ENCODE measurements at regions of chr12 and their contacts with region 1.

Region 1: DNA sequence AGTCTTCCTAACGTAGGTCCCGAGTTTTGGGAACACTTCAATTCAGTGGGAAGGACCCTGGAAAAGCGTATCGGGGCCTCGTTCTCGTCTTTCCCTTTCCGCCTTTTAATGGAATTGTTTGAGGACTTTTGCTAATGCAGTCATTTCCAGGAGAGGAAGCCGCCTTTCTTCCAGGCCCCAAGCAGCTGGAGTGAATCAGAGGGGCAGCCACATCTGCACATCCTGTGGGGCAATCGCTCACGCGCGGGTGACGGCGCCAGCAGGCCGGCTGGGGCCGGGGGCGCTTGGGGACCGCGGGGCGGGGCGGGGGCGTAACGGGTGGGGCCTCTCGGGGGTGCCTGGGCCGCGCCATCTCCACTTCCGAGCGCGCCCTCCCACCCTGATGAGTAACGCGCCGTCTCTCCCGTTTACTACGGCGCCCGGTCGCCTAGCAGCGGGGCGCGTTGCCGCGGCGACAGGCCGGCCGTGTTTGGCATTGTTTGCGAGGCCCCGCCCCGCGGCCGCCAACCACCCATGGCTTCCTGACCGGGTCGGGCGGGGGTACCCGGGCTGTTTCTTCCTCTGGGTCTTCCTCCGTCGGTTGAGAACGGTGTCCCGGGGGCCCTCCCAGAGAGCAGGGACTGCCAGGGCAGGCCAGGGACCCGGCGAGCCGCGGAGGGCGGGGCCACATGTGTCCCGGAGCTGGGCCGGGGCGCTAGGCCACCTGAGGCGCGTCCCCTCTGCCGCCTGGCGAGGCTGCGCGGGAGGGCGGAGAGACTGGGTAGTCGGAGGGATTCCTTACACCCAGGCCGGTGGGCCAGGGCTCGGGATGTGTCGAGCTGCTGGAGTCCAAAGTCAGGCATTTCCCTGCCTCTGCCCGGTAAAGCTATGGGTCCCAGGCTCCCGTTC is 2.3 kb downstream of the GSG1 start:
- DNase-seq: peak; percentile 92
- ATAC-seq: peak; percentile 55
- H3K4me3 ChIP-seq: peak overlapping the region; percentile 71
- H3K27ac ChIP-seq: peak overlapping the region; percentile 99
- H3K4me1 ChIP-seq: peaks cover 59% of the 10 kb centered on the region
- H3K27me3 ChIP-seq: no peaks in the 10 kb centered on the region
- CTCF ChIP-seq: no peak

Region 2: DNA sequence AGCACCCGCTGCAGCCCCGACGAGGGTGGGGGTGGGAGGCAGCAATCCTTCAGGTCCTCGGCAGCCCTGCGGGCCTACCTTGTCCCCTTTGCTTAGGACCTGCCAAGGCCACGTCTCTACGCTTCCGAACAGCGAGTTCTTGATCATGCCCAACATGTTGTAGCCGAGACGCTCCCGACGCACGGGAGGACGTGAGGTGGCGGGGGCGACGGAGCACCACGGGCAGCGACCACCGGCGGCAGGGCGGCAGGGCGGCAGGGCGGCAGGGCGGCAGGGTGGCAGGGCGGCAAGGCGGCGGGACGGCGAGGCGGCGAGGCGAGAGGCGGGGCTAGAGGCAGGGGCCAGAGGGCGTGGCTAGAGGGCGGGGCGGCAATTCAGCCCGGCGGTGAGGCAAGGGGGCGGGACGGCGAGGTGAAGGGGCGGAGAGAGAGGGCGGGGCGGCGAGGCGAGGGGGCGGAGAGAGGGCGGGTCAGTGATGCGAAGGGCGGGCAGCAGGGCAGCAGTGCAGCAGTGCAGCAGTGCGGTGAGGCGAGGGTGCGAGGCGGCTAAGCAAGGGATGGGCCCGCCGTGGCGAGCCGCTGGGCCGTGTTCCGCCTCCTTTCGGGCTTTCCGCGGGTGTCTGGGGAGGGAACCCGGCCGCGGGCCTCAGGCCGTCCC is 101.0 kb before region 1 on chr12 and contains the start of gene HEBP1:
- CTCF ChIA-PET with region 1: interaction called, 3 read pairs
- POLR2A ChIA-PET with region 1: no interaction called
- intact Hi-C with region 1: loop called (anchors 2 kb)
- DNase-seq: peak; percentile 76
- ATAC-seq: peak; percentile 69
- H3K4me3 ChIP-seq: peak within 1 kb of the TSS; percentile 100
- H3K27ac ChIP-seq: peak within 1 kb of the TSS; percentile 14
- H3K4me1 ChIP-seq: peaks cover 19% of the 10 kb centered on the region
- H3K27me3 ChIP-seq: no peaks in the 10 kb centered on the region
- CTCF ChIP-seq: no peak
- total RNA-seq, gene HEBP1: 6.2 and 8.2 TPM in 2 replicates

Region 3: GRCh38 chr12:13127444-13127843 is 26.3 kb after region 1 on chr12:
- CTCF ChIA-PET with region 1: no interaction called
- POLR2A ChIA-PET with region 1: interaction called, 7 read pairs
- intact Hi-C with region 1: loop called (anchors 1 kb)
- DNase-seq: peak; percentile 86
- ATAC-seq: peak; percentile 89
- H3K4me3 ChIP-seq: no peak overlapping the region
- H3K27ac ChIP-seq: peak overlapping the region; percentile 65
- H3K4me1 ChIP-seq: peaks cover 55% of the 10 kb centered on the region
- H3K27me3 ChIP-seq: no peaks in the 10 kb centered on the region
- CTCF ChIP-seq: no peak

Region 4: DNA sequence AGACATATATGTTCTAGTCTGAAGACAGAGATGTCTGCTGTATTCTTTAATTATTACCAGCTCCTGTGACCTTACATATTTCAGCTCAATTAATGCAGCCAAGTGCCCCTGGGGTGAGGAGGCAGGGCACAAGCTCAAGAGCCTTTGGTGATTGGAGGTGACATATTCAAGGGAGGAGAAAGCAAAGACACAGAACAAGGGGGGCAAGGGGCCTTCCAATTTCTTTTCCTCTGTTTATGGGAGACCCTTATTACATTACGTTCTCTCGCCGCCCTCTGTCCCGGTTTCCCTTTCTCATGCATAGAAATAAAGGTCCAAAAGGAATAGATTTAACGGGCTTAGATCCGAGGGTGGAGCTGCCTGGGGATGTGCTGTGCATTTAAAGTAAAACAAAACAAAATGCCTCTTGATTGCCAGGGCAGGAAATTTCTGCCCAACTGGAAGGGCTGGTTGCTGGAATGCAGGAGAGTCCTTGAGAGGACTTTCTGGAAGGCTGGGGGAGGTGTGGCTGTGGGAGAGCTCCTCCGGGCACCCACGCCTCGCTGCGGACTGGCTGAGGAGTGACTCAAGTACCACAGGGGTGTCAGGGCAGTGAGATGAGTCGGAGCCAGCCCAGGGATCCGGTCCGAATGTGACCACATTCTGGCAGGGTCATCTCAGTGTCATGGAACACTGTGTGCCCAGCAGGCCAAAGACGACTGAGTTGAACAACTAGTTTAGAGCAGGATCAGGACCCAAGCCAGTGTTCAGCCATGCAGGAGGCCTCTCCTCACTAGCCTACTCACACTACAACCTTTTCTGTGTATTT is 34.4 kb after region 1 on chr12:
- CTCF ChIA-PET with region 1: no interaction called
- POLR2A ChIA-PET with region 1: interaction called, 11 read pairs
- intact Hi-C with region 1: loop called (anchors 1 kb)
- DNase-seq: peak; percentile 97
- ATAC-seq: peak; percentile 94
- H3K4me3 ChIP-seq: peak overlapping the region; percentile 62
- H3K27ac ChIP-seq: peak overlapping the region; percentile 89
- H3K4me1 ChIP-seq: peaks cover 40% of the 10 kb centered on the region
- H3K27me3 ChIP-seq: no peaks in the 10 kb centered on the region
- CTCF ChIP-seq: peak; percentile 31; the same call in 1 of the 2 replicates

Region 5: GRCh38 chr12:13179211-13180074 is 78.3 kb after region 1 on chr12:
- CTCF ChIA-PET with region 1: no interaction called
- POLR2A ChIA-PET with region 1: interaction called, 14 read pairs
- intact Hi-C with region 1: no loop called
- DNase-seq: peak; percentile 74
- ATAC-seq: peak; percentile 90
- H3K4me3 ChIP-seq: peak overlapping the region; percentile 60
- H3K27ac ChIP-seq: peak overlapping the region; percentile 86
- H3K4me1 ChIP-seq: peaks cover 56% of the 10 kb centered on the region
- H3K27me3 ChIP-seq: no peaks in the 10 kb centered on the region
- CTCF ChIP-seq: no peak

Region 6: DNA sequence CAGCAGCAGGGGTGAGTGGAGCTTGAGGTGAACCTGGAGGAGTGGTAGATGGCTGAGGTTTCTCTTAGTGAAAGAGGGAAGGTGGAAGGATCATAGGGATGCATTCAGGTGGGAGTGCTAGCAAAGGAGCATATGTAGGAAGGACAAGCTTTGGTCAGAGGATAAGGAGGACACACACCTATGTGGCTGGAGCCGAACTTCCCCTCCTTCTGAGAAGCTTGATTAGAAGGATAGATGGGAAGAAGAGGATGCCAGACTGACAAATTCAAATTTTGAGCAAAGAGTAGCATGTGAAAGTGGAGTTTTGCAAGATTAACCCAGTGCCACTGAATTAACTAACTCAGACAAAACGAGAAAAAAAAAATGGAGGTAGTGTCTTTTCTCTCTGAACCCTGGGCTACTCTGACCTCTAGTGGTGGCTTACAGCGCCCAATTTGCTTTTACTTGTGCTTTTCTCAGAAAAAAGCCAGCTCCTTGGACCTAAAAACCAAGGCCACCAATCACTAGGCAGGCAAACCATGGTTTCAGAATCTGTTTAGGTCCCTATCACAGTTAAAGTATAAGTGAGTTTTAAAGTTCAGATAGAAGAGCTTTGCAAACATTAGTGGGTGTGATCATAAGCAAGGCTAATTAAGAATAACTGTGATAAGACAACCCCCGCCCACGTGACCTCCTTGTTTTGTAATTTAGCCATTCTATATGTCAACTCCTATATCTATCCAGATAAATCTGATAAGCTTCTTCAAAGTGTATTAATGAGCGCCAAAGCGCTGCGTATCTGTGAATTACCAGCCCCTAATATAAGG is 110.9 kb after region 1 on chr12:
- CTCF ChIA-PET with region 1: interaction called, 17 read pairs
- POLR2A ChIA-PET with region 1: interaction called, 7 read pairs
- intact Hi-C with region 1: loop called (anchors 1 kb)
- DNase-seq: peak; percentile 77
- ATAC-seq: no peak; the same call in 1 of the 2 replicates
- H3K4me3 ChIP-seq: no peak overlapping the region
- H3K27ac ChIP-seq: peak overlapping the region; percentile 19
- H3K4me1 ChIP-seq: peaks cover 49% of the 10 kb centered on the region
- H3K27me3 ChIP-seq: no peaks in the 10 kb centered on the region
- CTCF ChIP-seq: peak; percentile 71

Measured in PC-3 (cell line).